Activated CD4-positive, alpha-beta T cell treated with anti-CD3 and anti-CD28 coated beads for 36 hours (primary cell): ENCODE measurements at regions of chr2 and their contacts with region 1.

Region 1: GRCh38 chr2:239401067-239401880 is 454 bp upstream of the HDAC4 start:
- DNase-seq: peak; percentile 99
- ATAC-seq: peak; percentile 93
- H3K4me3 Mint-ChIP-seq: peak overlapping the region; percentile 88
- H3K27ac Mint-ChIP-seq: peak overlapping the region; percentile 97
- H3K4me1 Mint-ChIP-seq: peaks cover 41% of the 10 kb centered on the region
- H3K27me3 Mint-ChIP-seq: peaks cover 2% of the 10 kb centered on the region

Region 2: DNA sequence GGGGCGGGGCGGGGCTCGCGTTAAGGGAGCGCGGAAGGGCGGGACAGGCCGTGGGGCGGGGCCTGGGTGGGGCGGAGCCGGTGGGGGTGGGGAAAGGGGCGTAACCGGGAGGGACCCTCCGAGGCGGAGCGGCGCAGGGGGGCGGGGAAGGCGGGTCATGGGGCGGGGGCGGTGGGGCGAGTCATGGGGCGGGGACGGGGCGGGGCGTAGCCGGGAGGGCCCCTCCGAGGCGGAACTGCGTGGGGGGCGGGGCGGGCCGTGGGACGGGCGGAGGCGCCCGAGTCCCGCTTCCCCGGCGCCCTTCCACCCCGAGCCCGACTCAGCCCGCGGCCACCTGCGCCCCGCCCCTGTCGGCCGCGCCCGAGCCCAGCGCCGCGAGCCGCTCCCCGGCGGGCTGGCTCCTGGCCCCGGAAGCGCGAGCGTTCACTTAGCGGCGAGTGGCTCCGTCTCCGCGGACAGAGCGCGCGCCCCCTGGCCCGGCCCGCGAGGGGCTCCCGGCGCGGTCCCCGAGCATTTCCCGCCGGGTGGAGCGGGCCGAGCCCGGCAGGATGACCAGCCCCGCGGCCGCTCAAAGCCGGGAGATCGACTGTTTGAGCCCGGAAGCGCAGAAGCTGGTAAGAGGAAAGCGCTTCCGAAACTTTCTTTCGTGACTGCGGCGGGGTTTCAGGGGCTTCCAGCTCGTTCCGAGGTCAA is 1709.2 kb before region 1 on chr2:
- CTCF ChIA-PET with region 1: no interaction called
- POLR2A ChIA-PET with region 1: no interaction called
- intact Hi-C with region 1: loop called in 1 of 2 experiments (anchors 5 kb)
- DNase-seq: peak; percentile 98
- ATAC-seq: peak; percentile 59
- H3K4me3 Mint-ChIP-seq: peak overlapping the region; percentile 97
- H3K27ac Mint-ChIP-seq: peak overlapping the region; percentile 97
- H3K4me1 Mint-ChIP-seq: peaks cover 64% of the 10 kb centered on the region
- H3K27me3 Mint-ChIP-seq: no peaks in the 10 kb centered on the region

Region 3: GRCh38 chr2:239216614-239217273 is 184.5 kb before region 1 on chr2:
- CTCF ChIA-PET with region 1: interaction called, 3 read pairs
- POLR2A ChIA-PET with region 1: no interaction called
- intact Hi-C with region 1: loop called in 1 of 2 experiments (anchors 2 kb)
- DNase-seq: peak; percentile 71
- ATAC-seq: peak; percentile 97
- H3K4me3 Mint-ChIP-seq: peak overlapping the region; percentile 66
- H3K27ac Mint-ChIP-seq: peak overlapping the region; percentile 95
- H3K4me1 Mint-ChIP-seq: peaks cover 73% of the 10 kb centered on the region
- H3K27me3 Mint-ChIP-seq: no peaks in the 10 kb centered on the region

Region 4: DNA sequence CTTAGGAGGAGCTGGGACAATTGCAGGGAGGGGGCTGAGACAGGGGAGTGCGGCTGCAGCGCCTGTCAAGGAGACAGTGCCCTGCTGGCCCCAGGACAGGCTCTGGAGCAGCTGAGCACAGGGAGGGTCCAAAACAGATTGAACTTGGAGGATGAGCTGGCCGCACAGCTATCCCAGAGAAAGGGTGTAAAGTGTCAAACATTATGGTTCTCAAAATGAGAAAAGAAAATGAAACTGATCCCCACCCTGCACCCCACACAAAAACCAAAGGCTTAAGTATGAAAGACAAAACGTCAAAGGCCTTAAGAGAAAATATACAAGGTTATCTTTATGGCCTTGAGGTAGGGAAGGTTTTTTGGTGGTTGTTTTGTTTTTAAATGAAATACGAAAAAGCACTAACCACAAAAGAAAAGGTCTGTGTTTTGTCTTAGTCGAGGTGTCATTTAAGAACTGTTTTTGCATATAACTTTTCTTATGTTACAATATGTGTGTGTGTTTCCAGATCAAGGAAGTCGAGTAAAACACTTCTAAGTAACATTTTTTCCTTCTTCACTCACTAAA is 112.2 kb before region 1 on chr2:
- CTCF ChIA-PET with region 1: interaction called, 5 read pairs
- POLR2A ChIA-PET with region 1: no interaction called
- intact Hi-C with region 1: loop called (anchors 2 to 5 kb)
- DNase-seq: peak; percentile 69
- ATAC-seq: peak; percentile 65
- H3K4me3 Mint-ChIP-seq: peak overlapping the region; percentile 36
- H3K27ac Mint-ChIP-seq: peak overlapping the region; percentile 89
- H3K4me1 Mint-ChIP-seq: peaks cover 80% of the 10 kb centered on the region
- H3K27me3 Mint-ChIP-seq: peaks cover 21% of the 10 kb centered on the region

Region 5: DNA sequence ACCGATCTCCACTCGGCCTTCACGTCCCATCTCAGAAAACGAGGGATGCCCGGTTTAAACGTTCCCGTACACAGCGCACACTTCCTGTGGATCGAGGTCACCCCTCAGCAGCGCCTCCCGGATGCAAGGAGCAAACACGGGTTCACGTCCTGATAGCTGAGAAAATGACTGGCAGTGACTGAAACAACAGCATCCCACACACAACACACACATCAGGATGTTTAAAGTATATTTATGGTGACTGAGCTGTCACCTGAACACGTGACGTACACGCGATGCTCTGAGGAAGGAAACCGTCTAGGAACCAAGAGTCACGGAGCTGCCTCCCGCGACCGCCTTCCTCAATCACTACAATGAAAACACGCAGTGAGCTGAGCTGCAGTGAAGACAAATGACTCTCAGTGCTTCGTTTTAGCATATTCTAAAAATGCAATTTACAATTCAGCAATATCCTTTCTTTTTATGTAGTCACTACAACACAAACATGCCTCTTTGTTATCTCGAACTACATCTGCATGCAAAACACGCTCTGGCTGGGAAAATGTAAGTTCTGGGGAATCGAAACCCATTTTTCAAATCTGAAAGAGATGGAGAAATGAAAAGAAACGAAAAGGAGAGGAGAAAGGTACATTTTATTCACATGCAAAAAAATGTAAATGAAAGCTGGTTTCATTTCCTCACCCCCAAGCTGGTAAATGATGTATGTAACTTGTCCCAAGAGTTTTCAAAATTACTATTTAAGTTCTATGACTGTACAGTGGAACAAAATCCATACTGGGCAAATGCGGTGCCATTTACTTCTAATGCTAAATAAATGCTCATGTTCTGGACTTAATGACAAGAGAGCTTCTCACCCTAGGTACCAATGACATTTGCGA is 20.2 kb before region 1 on chr2:
- CTCF ChIA-PET with region 1: interaction called, 13 read pairs
- POLR2A ChIA-PET with region 1: interaction called, 15 read pairs
- intact Hi-C with region 1: loop called (anchors 1 kb)
- DNase-seq: peak; percentile 86
- ATAC-seq: peak; percentile 84
- H3K4me3 Mint-ChIP-seq: peak overlapping the region; percentile 62
- H3K27ac Mint-ChIP-seq: peak overlapping the region; percentile 94
- H3K4me1 Mint-ChIP-seq: peaks cover 40% of the 10 kb centered on the region
- H3K27me3 Mint-ChIP-seq: no peaks in the 10 kb centered on the region

Region 6: DNA sequence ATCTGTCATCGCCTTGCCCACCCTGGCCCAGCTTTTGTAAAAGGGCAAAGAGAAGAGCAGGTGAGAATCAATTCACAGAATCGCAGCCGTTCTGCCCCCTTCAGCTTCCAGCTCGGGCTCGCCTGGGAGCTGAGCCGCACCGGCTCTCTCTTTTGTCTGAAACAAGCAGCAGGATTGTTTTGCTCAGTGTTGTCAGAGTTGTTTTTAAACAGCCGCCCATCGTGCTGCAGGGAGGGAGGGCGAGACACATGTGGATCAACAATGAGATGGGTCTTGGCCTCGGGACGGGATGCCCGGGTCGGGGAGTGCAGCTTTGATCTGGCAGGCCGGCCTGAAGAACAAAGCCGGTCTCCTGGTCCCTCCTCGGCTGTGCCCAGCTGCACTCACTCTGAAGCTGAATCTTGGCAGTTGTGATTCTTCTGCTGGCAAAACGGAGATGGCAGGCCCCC is 39.3 kb after region 1 on chr2:
- CTCF ChIA-PET with region 1: no interaction called
- POLR2A ChIA-PET with region 1: no interaction called
- intact Hi-C with region 1: no loop called
- DNase-seq: no peak
- ATAC-seq: no peak
- H3K4me3 Mint-ChIP-seq: no peak overlapping the region
- H3K27ac Mint-ChIP-seq: no peak overlapping the region
- H3K4me1 Mint-ChIP-seq: peaks cover 12% of the 10 kb centered on the region
- H3K27me3 Mint-ChIP-seq: peaks cover 26% of the 10 kb centered on the region

Region 7: DNA sequence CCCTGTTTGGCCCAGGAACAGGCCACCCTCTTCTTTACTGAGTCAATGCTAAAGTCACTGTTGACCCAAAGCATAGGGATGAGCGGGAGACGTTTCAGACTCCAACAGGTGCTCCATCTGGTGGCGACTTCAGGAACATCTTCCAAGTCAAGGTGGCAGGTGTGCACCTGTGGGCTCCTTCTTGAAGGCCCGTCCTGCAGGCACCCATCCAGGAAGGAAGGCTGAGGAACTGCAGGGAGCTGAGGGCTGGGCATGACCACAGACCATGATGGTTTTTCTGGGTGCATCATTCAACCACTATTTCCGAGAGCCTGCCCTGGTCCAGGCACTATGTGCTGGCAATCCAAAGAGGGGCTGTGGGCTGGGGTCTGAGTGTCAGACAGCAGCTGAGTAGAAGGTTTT is 481.1 kb after region 1 on chr2:
- CTCF ChIA-PET with region 1: no interaction called
- POLR2A ChIA-PET with region 1: no interaction called
- intact Hi-C with region 1: loop called in 1 of 2 experiments (anchors 5 kb)
- DNase-seq: peak; percentile 77
- ATAC-seq: peak; percentile 75
- H3K4me3 Mint-ChIP-seq: no peak overlapping the region
- H3K27ac Mint-ChIP-seq: no peak overlapping the region
- H3K4me1 Mint-ChIP-seq: peaks cover 4% of the 10 kb centered on the region
- H3K27me3 Mint-ChIP-seq: no peaks in the 10 kb centered on the region

Region 8: GRCh38 chr2:240434728-240435456 is 1033.6 kb after region 1 on chr2:
- CTCF ChIA-PET with region 1: no interaction called
- POLR2A ChIA-PET with region 1: no interaction called
- intact Hi-C with region 1: loop called in 1 of 2 experiments (anchors 1 kb)
- DNase-seq: peak; percentile 91
- ATAC-seq: peak; percentile 64
- H3K4me3 Mint-ChIP-seq: peak overlapping the region; percentile 68
- H3K27ac Mint-ChIP-seq: peak overlapping the region; percentile 26
- H3K4me1 Mint-ChIP-seq: peaks cover 12% of the 10 kb centered on the region
- H3K27me3 Mint-ChIP-seq: peaks cover 15% of the 10 kb centered on the region